ENCODE measurements at regions of chr20 and their contacts with region 1.

Region 1: DNA sequence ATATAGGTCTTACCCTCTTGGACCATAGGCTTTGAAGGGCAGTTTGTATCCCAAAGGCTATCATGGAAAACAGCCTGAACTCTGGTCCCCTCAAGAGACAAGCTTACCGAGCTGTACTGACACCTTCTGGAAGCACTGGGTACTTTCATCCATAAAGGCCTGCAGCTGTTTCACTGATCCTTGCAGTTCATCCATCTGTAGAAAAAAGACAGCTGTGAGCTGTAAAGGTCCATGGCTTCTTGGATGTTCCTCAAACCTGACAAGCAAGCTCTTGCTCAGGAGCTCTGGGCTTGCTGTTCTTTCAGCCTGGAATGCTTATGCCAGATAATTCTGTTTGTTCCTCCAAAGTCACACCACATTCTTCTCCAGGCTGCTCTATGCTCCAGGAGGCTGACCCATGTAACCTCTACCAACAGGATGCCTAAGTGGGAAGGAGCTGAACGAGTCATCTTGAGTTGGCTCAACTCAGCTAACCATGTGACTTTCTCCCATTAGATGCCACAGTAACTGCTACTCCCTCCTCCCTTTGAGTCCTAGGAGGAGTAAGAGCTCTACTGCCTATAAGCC is 8.8 kb upstream of the NDRG3 start:
- DNase-seq: peak in 7 of 9 donors; percentile 12 to 56 (median 45)
- ATAC-seq: peak; percentile 88
- H3K4me3 ChIP-seq: no peak overlapping the region
- H3K4me3 Mint-ChIP-seq: no peak overlapping the region
- H3K27ac ChIP-seq: no peak overlapping the region
- H3K27ac Mint-ChIP-seq: peak overlapping the region in 1 of 9 donors; percentile 51
- H3K4me1 ChIP-seq: no peaks in the 10 kb centered on the region
- H3K4me1 Mint-ChIP-seq: peaks cover 0 to 11% (median 0%) of the 10 kb centered on the region in 7 donors
- H3K27me3 ChIP-seq: no peaks in the 10 kb centered on the region
- H3K27me3 Mint-ChIP-seq: no peaks in the 10 kb centered on the region

Region 2: DNA sequence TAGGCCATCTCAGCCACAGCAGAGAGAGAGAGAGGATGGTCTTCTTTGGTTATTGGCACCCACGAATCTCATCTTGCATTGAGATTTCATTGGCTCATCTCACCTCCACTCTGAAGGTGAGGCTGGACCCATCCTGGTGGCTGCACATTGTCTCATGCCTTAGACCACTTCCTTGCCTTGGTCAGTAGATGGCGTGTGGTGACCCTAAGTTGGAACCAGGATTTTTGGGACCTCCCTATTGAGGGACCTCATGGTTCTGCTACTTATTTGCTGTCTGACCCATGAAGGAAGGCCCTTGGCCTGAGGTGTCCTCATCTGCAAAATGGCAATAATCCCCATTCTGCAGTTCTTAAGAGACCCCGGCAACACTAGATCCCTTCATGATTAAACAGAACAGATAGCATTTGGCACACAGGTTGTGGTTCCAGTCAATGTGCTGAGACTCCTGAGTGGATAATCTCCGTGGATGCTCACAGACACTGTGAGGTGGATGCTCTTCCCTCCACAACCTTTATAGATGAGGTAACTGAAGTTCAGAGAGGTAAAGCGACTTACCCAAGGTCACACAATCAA is 540.0 kb before region 1 on chr20:
- CTCF ChIA-PET with region 1: no interaction called
- POLR2A ChIA-PET with region 1: no interaction called
- intact Hi-C with region 1: loop called in 1 of 2 experiments (anchors 1 kb)
- DNase-seq: peak in 1 of 9 donors; percentile 18
- ATAC-seq: peak; percentile 42
- H3K4me3 ChIP-seq: no peak overlapping the region
- H3K4me3 Mint-ChIP-seq: no peak overlapping the region
- H3K27ac ChIP-seq: no peak overlapping the region
- H3K27ac Mint-ChIP-seq: no peak overlapping the region
- H3K4me1 ChIP-seq: no peaks in the 10 kb centered on the region
- H3K4me1 Mint-ChIP-seq: no peaks in the 10 kb centered on the region
- H3K27me3 ChIP-seq: no peaks in the 10 kb centered on the region
- H3K27me3 Mint-ChIP-seq: peaks cover 0 to 6% (median 0%) of the 10 kb centered on the region in 5 donors

Region 3: GRCh38 chr20:36344517-36345136 is 410.1 kb before region 1 on chr20:
- CTCF ChIA-PET with region 1: no interaction called
- POLR2A ChIA-PET with region 1: no interaction called
- intact Hi-C with region 1: no loop called
- DNase-seq: peak in 1 of 9 donors; percentile 49
- ATAC-seq: no peak
- H3K4me3 ChIP-seq: no peak overlapping the region
- H3K4me3 Mint-ChIP-seq: no peak overlapping the region
- H3K27ac ChIP-seq: no peak overlapping the region
- H3K27ac Mint-ChIP-seq: no peak overlapping the region
- H3K4me1 ChIP-seq: no peaks in the 10 kb centered on the region
- H3K4me1 Mint-ChIP-seq: no peaks in the 10 kb centered on the region
- H3K27me3 ChIP-seq: no peaks in the 10 kb centered on the region
- H3K27me3 Mint-ChIP-seq: peaks cover 0 to 18% (median 12%) of the 10 kb centered on the region in 5 donors

Region 4: DNA sequence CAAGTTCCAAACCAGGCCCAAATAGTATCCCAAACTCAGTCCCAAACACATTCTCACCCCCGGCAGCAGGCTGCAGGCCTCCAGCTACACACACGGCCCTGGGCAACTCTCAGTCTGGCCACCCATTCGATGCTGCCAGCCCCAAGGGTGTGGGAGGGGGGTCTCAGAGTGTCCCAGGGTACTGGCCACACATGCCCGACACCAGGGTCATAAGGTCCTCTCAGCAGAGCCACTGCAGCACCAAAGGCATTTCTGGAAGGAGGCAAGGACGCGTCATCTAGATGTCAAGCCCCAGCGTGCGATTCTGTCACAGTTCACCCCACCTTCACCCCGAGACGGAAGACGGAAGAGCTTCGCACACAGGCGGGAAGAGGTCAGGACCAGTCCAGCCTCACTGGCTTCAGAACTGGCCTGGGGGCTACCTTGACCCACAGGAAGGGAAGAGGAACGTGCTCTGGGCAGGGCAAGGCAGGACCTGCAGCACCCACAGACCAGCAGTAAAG is 203.9 kb before region 1 on chr20:
- CTCF ChIA-PET with region 1: no interaction called
- POLR2A ChIA-PET with region 1: no interaction called
- intact Hi-C with region 1: loop called (anchors 1 kb)
- DNase-seq: no peak
- ATAC-seq: no peak
- H3K4me3 ChIP-seq: no peak overlapping the region
- H3K4me3 Mint-ChIP-seq: no peak overlapping the region
- H3K27ac ChIP-seq: no peak overlapping the region
- H3K27ac Mint-ChIP-seq: peak overlapping the region in 1 of 9 donors; percentile 60
- H3K4me1 ChIP-seq: no peaks in the 10 kb centered on the region
- H3K4me1 Mint-ChIP-seq: peaks cover 0 to 5% (median 2%) of the 10 kb centered on the region in 7 donors
- H3K27me3 ChIP-seq: no peaks in the 10 kb centered on the region
- H3K27me3 Mint-ChIP-seq: no peaks in the 10 kb centered on the region

Region 5: GRCh38 chr20:36666181-36666740 is 88.5 kb before region 1 on chr20:
- CTCF ChIA-PET with region 1: interaction called, 6 read pairs
- POLR2A ChIA-PET with region 1: no interaction called
- intact Hi-C with region 1: loop called in 1 of 2 experiments (anchors 1 kb)
- DNase-seq: peak in 4 of 9 donors; percentile 8 to 28 (median 20)
- ATAC-seq: no peak
- H3K4me3 ChIP-seq: no peak overlapping the region
- H3K4me3 Mint-ChIP-seq: no peak overlapping the region
- H3K27ac ChIP-seq: no peak overlapping the region
- H3K27ac Mint-ChIP-seq: no peak overlapping the region
- H3K4me1 ChIP-seq: no peaks in the 10 kb centered on the region
- H3K4me1 Mint-ChIP-seq: peaks cover 0 to 10% (median 0%) of the 10 kb centered on the region in 7 donors
- H3K27me3 ChIP-seq: no peaks in the 10 kb centered on the region
- H3K27me3 Mint-ChIP-seq: no peaks in the 10 kb centered on the region

Region 6: DNA sequence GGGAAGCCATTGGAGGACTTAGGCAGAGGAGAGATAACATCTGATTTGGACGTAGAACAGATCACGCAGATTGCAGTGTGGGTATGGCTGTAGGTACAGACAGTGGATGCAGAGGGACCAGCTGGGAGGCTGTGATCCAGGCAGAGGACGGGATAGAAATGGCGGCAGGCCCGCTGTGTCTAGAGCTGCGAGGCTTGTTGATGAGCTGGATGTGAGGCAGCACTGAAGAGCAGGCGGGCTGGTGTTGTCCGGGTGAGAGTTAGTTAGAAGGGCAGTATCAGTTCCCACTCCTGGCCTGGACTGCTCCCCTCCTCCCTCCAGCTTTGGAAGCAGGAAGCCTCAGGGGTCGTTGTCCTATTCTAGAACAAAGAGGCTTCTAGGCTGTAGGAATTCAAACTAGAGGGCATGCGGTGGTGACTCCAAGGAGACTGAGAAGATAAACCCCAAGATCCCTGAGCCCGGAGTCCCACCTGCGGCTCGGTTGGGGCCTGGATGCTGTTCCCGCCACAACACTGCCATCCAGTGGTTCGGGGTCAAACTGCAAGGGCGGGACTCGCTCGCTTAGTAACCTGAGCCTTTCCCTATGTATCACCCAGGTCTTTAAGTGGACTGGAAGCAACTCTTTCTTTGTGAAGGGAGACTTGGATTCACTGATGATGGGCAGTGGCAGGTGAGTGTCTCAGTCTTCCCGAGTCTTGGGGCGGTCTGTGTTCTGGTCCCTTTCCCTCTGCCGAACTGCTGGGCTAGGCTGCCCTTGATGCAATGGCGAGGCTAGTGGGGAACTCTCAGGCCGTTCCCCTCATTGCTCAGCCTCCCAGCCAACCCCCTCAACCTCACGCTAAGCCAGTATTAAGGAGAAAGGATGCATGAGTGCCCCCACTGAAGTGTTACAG is 132.4 kb after region 1 on chr20:
- CTCF ChIA-PET with region 1: interaction called, 3 read pairs
- POLR2A ChIA-PET with region 1: no interaction called
- intact Hi-C with region 1: loop called in 1 of 2 experiments (anchors 1 kb)
- DNase-seq: peak; percentile 59 to 84 (median 75)
- ATAC-seq: peak; percentile 94
- H3K4me3 ChIP-seq: no peak overlapping the region
- H3K4me3 Mint-ChIP-seq: peak overlapping the region in 7 of 10 donors; percentile 10 to 62 (median 36)
- H3K27ac ChIP-seq: peak overlapping the region; percentile 33
- H3K27ac Mint-ChIP-seq: peak overlapping the region; percentile 2 to 89 (median 73)
- H3K4me1 ChIP-seq: peaks cover 5 to 7% of the 10 kb centered on the region in 2 donors
- H3K4me1 Mint-ChIP-seq: peaks cover 4 to 22% (median 16%) of the 10 kb centered on the region in 7 donors
- H3K27me3 ChIP-seq: no peaks in the 10 kb centered on the region
- H3K27me3 Mint-ChIP-seq: no peaks in the 10 kb centered on the region

Measured in naive thymus-derived CD4-positive, alpha-beta T cell (primary cell).